AG04450 (cell line): ENCODE measurements at regions of chr1 and their contacts with region 1.

Region 1: GRCh38 chr1:23664837-23665795 is 26.5 kb upstream of the RPL11 start:
- DNase-seq: no peak
- H3K4me3 ChIP-seq: no peak overlapping the region
- H3K27ac ChIP-seq: no peak overlapping the region
- H3K27me3 ChIP-seq: peaks cover 4% of the 10 kb centered on the region
- CTCF ChIP-seq: peak; percentile 45

Region 2: DNA sequence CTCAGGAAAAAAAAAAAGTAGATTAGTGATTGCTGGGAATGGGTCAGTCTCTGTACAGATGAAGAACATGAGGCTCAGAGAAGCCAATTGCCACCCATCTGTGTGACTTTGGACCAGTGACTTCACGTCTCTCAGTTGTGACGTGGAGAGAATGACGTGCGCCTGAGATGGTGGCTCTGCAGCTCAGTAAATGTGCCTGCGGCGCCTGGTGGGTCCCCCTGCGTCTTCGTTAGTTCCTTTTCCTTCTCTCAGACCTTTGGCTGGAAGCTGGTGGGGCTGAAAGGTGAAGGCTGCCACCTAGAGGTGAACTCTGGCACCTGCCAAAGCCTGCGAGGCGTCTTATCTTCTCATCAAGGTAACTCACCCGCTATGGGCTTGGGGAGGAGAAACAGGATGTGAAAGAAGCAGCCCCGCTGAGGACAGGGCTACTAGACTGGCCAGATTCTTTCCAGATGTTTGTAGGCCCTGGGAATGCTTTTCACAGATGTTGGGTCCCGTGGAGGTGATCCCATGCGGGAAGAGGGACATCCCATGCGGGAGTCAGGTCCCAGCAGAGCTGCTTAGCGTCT is 125.3 kb before region 1 on chr1:
- CTCF ChIA-PET with region 1: interaction called, 18 read pairs
- POLR2A ChIA-PET with region 1: no interaction called
- DNase-seq: peak; percentile 70
- H3K4me3 ChIP-seq: no peak overlapping the region
- H3K27ac ChIP-seq: no peak overlapping the region
- H3K27me3 ChIP-seq: no peaks in the 10 kb centered on the region
- CTCF ChIP-seq: peak; percentile 96

Region 3: GRCh38 chr1:23651069-23651808 is 13.9 kb before region 1 on chr1:
- CTCF ChIA-PET with region 1: interaction called, 14 read pairs
- POLR2A ChIA-PET with region 1: no interaction called
- DNase-seq: no peak
- H3K4me3 ChIP-seq: no peak overlapping the region
- H3K27ac ChIP-seq: no peak overlapping the region
- H3K27me3 ChIP-seq: peaks cover 7% of the 10 kb centered on the region
- CTCF ChIP-seq: no peak

Region 4: DNA sequence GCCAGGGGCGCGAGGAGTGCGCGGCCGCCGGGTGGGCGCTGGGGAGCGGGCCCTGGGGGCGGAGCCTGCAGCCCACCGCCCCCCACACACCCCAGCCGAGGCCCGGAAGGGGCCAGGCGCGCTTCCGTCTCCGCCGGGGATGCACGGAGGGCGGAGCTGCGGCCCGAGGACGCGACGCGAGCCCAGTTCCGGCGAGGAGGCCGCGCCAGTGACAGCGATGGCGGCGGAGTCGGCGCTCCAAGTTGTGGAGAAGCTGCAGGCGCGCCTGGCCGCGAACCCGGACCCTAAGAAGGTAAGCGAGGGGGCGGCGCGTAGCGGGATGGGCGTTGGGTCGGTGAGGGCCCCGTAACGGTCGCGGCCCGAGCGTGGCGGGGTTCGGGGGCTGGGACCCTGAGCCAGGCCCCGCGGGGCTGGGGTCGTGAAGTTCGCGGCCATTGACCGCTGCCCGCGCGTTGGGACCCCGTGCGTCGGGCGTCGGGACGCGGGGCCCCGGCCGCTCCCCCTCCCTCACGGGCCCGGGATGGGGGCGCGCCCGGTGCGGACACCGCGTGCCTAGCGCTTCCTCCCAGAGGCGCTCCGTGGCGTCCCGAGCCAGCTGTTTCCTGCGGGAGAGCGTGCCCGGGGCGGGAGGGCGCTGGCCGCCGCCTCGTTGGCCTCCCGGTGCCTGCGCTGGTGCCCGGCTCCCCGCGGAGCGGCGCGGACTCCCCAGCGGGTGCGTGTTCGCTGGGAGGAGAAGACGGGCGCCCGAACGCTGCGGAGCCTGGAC is 78.4 kb after region 1 on chr1 and contains the start of gene ELOA:
- CTCF ChIA-PET with region 1: no interaction called
- POLR2A ChIA-PET with region 1: no interaction called
- DNase-seq: no peak
- H3K4me3 ChIP-seq: peak within 1 kb of the TSS; percentile 78
- H3K27ac ChIP-seq: peak within 1 kb of the TSS; percentile 61
- H3K27me3 ChIP-seq: no peaks in the 10 kb centered on the region
- CTCF ChIP-seq: no peak
- polyA plus RNA-seq, gene ELOA: 27.5 and 30.8 TPM in 2 replicates